ENCODE measurements at regions of chr5 and their contacts with region 1.

Region 1: DNA sequence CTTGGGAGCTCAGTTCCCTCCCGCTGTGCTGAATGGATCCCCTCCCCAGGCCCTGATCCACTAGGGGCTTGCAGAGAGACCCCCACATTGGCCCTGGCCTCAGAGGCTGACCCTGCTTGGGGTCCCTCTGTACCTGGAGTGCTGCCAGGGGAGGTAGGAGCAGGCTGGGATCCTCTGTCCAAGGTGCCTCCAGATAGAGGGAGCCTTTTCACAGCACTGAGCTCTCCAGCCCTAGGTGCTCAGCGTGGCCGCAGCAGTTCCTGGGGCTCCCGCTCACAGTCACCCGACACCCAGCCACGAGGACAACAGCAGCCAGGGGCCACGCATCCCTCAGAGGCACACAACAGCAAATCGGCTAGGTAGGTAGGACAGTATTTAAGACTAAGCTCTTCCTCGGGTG is 62.2 kb upstream of the IRX2 start:
- DNase-seq: no peak
- H3K4me3 Mint-ChIP-seq: no peak overlapping the region
- H3K27ac Mint-ChIP-seq: no peak overlapping the region
- H3K4me1 Mint-ChIP-seq: no peaks in the 10 kb centered on the region
- H3K27me3 Mint-ChIP-seq: no peaks in the 10 kb centered on the region
- CTCF ChIP-seq: no peak

Region 2: DNA sequence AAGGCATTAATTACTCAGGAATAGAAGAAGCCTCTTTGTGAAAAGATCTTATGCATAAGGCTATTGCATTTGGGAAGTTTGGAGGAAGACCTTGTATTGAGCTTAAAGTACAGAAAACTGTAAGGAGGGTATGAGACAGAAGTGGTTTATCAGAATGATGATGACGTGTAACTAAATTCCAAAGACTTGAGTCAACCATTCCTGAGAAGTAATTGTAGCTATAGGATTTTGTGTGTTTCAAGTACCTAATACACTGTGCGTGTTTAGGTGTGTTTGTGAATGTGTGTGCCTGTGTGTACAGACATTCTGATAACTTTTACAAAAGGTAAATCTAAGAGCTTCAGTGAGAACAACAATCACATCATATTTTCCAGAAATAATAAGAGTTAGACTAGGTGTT is 15.7 kb before region 1 on chr5:
- CTCF ChIA-PET with region 1: interaction called, 18 read pairs
- intact Hi-C with region 1: no loop called
- DNase-seq: no peak
- H3K4me3 Mint-ChIP-seq: no peak overlapping the region
- H3K27ac Mint-ChIP-seq: no peak overlapping the region
- H3K4me1 Mint-ChIP-seq: no peaks in the 10 kb centered on the region
- H3K27me3 Mint-ChIP-seq: no peaks in the 10 kb centered on the region
- CTCF ChIP-seq: no peak